ENCODE measurements at regions of chr10 and their contacts with region 1.

Region 1: DNA sequence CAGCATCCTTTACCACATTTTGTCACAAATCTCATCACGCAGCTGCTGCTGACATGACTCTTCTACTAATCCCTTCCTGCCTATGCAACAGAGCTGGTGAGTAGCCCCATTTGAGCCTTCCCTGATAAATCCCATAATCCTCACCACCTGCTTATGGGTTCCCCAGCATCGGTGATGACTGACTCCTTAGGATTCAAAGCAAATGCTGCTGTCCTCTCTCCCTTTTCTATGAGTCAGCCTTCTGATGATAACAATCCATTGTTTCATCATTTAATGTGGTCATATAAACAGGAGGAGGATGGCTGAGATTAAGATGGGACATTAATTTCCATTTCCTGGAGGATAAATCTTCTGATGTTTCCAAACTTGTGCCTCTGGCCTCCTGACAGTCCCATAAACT is 73.4 kb downstream of the SORCS1 start:
- DNase-seq: no peak

Region 2: GRCh38 chr10:107163881-107164861 is 73.0 kb after region 1 on chr10 and contains the start of gene SORCS1:
- intact Hi-C with region 1: no loop called
- DNase-seq: no peak
- total RNA-seq, gene SORCS1: 0.37 to 1.2 TPM

Region 3: DNA sequence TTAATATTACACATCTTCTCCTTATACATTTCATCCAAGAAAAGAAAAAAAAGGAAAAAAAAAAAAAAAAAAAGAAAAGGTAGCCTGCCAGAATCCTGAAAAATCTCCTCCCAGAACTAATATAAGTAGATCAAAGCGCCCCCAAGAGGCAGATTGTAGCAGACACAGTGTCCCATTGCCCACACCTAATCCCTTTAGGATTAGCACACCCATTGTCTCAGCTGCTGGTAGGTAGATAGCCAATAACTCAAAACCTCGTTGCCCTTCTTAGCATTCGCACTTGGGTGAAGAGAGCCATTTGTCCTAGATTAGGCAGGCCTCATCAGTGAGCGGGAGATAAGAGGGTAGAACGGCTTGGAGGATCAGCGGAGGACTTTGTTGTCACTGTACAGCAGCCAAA is 173.6 kb after region 1 on chr10:
- intact Hi-C with region 1: no loop called
- DNase-seq: no peak

Region 4: GRCh38 chr10:108208732-108209131 is 1117.6 kb after region 1 on chr10:
- intact Hi-C with region 1: loop called in 1 of 2 experiments (anchors 10 kb)
- DNase-seq: no peak